ENCODE measurements at regions of chr2 and their contacts with region 1.

Region 1: DNA sequence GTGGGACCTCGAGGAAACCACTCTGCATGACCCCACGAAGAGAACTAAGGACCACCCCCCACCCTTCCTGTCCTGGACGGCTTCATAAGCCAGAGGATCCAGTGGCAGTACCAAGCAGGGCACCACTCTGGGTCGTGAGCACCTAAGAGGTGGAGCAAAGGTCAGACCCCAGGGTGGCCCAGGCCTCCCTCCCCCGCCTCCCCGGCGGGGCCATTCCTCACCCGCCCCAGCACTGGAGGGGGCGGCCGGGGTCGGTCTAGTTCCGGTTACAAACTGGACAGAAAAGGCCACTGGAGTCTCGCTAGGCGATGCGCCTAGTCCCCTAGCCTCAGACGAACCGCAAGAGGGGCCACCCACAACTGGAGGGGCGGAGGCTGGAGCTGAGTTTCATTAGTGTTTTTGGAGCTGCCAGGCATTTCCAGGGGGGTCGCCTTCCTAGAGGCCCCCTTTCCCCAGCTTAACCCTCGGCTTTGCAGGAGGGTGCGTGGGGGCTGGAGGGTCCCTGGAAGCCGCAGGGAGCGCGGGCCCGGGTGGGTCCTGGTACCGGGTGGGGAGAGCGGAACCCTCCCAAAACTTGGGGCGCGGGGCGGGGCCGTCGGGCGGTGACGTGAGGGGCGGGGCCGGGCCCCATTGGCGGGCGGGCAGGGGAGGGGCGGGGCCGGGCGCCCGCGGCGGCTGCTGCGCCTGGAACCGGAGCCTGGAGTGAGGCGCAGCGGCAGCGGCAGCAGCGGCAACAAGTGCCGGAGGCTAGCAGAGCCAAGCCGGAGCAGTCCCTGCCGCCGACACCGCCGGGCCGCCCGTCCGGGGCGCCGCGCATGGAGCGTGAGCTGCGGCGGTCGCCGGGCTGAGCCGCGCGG is at the start of gene B3GNT2:
- DNase-seq: peak; percentile 72
- ATAC-seq: peak; percentile 76
- H3K4me3 ChIP-seq: peak within 1 kb of the TSS; percentile 90
- H3K27ac ChIP-seq: peak within 1 kb of the TSS; percentile 51
- H3K4me1 ChIP-seq: peaks cover 7% of the 10 kb centered on the region
- H3K27me3 ChIP-seq: no peaks in the 10 kb centered on the region
- CTCF ChIP-seq: no peak
- total RNA-seq, gene B3GNT2: 14.5 and 18.0 TPM in 2 replicates

Region 2: GRCh38 chr2:61910603-61911002 is 285.0 kb before region 1 on chr2:
- CTCF ChIA-PET with region 1: no interaction called
- POLR2A ChIA-PET with region 1: no interaction called
- intact Hi-C with region 1: loop called (anchors 10 kb)
- DNase-seq: peak; percentile 57
- ATAC-seq: no peak
- H3K4me3 ChIP-seq: no peak overlapping the region
- H3K27ac ChIP-seq: no peak overlapping the region
- H3K4me1 ChIP-seq: peaks cover 6% of the 10 kb centered on the region; the same call in 1 of the 2 replicates
- H3K27me3 ChIP-seq: no peaks in the 10 kb centered on the region
- CTCF ChIP-seq: peak; percentile 56

Region 3: DNA sequence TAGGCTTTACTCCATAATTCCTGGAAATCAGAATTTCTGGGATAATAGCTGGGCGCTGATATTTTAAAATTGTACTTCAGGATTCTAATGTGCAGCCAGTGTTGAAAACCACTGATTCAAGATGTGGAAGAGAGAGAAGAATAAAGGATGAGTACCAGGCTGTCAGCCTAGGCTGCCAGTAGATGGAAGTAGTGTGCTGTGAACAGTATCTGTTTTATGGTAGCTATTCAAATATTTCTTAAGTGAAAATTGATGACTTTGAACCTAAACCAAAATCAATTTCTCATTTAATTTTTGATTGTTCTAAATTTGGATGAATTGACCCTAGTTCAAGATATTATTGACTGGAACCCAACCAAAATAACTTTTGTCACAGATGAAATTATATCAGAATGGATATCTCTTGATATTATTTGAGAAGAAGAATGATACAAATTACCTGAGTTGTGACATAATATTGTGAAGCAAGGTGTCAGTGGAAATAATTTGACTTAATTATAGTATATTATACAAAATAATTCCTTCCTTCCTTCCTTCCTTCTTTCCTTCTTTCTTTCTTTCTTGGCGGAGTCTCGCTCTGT is 202.1 kb before region 1 on chr2:
- CTCF ChIA-PET with region 1: no interaction called
- POLR2A ChIA-PET with region 1: no interaction called
- intact Hi-C with region 1: loop called (anchors 2 kb)
- DNase-seq: peak; percentile 68
- ATAC-seq: peak; percentile 80
- H3K4me3 ChIP-seq: no peak overlapping the region
- H3K27ac ChIP-seq: no peak overlapping the region
- H3K4me1 ChIP-seq: no peaks in the 10 kb centered on the region
- H3K27me3 ChIP-seq: no peaks in the 10 kb centered on the region
- CTCF ChIP-seq: peak; percentile 89

Region 4: DNA sequence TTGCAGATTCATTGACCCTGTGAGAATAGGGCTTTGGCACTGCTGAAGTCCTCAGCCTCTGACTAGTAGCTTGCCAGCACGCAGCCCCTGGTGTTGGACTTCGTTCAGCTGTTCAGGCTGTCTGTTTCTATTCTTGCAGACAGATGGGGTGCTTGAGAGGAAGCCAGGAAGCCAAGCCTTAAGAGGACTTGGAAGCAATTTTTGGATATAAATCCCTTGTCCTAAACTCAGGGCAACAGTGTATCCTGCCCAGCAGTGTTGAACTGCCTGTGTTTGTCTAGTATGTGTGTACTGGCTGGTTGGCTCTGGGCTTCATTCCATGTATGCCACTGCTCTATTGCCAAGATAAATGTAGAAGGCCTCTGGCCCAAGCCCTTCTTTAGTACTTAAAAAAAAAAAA is 181.5 kb before region 1 on chr2:
- CTCF ChIA-PET with region 1: no interaction called
- POLR2A ChIA-PET with region 1: no interaction called
- intact Hi-C with region 1: loop called (anchors 5 kb)
- DNase-seq: peak; percentile 6
- ATAC-seq: peak; percentile 88
- H3K4me3 ChIP-seq: no peak overlapping the region
- H3K27ac ChIP-seq: no peak overlapping the region
- H3K4me1 ChIP-seq: no peaks in the 10 kb centered on the region
- H3K27me3 ChIP-seq: no peaks in the 10 kb centered on the region
- CTCF ChIP-seq: no peak

Region 5: DNA sequence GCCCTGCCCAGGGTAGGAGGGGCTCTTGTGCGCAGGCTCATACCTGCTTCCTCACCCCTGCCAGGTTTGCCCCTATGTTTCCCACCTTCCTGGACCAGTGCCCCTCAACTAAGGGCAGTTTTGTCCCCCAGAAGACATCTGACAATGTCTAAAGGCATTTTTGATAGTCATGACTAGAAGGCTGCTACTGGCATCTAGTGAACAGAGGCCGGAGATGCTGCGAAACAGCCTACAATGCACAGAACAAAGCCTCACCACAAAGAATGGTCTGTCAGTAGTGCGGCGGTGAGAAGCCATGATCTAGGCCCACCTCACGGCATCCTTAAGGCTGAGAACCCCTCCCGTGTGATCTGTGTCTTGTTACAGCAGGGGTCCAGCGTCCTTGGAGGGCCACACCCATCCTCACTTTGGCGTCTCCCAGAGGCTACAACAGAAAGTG is 214.4 kb after region 1 on chr2:
- CTCF ChIA-PET with region 1: no interaction called
- POLR2A ChIA-PET with region 1: no interaction called
- intact Hi-C with region 1: loop called (anchors 5 kb)
- DNase-seq: no peak
- ATAC-seq: no peak
- H3K4me3 ChIP-seq: no peak overlapping the region
- H3K27ac ChIP-seq: no peak overlapping the region
- H3K4me1 ChIP-seq: peaks cover 5% of the 10 kb centered on the region
- H3K27me3 ChIP-seq: no peaks in the 10 kb centered on the region
- CTCF ChIP-seq: 0 out of 2 replicates have a peak, but pooled peaks have one; percentile 22